MCF 10A (cell line): ENCODE measurements at regions of chr2 and their contacts with region 1.

Region 1: DNA sequence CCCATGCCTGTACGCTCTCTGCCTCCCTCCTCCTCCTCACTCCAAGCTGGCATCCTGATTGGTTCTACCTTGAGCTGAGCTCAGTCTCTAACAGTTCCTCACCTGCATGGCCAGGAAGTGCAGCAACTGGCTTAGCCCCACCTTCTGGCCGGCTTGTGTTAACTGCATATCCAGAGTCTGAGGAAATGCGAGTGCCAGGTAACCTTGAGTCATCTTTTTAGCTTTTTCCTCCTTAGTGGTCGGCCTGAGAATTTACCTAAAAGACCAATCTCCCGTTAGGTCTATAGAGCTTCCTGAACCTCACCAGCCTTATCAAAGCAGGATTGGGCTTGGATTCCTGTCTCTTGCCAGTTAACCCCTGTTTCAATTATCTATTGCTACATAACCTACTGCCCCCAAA is 89.5 kb upstream of the STK39 start:
- DNase-seq: peak; percentile 86
- H3K4me3 Mint-ChIP-seq: no peak overlapping the region
- H3K27ac Mint-ChIP-seq: no peak overlapping the region
- H3K4me1 Mint-ChIP-seq: no peaks in the 10 kb centered on the region
- H3K27me3 Mint-ChIP-seq: no peaks in the 10 kb centered on the region
- CTCF ChIP-seq: peak; percentile 44

Region 2: DNA sequence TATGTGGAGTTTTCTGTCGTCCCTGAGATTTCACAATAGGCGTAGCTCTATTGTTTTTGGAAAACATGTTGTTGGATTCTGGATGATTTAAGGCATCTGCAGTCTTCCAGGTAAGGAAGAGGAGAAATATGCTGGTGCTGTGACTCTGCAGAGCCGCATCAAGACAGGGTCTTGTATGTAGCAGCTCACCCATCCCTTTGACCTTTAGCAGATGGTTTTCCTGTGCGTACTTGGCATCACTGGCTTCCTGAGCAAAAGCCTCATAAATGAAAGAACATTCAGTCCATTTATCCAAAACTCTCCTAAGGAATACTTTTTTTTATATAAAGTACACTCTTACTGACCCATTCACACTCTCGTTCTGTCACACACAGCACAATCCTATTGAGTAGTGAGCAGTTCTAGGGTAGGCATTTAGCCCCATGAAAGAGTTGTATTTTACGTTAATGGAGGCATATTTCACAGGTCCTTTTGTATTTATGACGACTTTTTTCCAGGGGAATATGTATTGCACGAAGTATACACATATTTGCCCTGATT is 533.3 kb before region 1 on chr2:
- CTCF ChIA-PET with region 1: no interaction called
- POLR2A ChIA-PET with region 1: no interaction called
- intact Hi-C with region 1: no loop called
- DNase-seq: no peak
- H3K4me3 Mint-ChIP-seq: no peak overlapping the region
- H3K27ac Mint-ChIP-seq: no peak overlapping the region
- H3K4me1 Mint-ChIP-seq: no peaks in the 10 kb centered on the region
- H3K27me3 Mint-ChIP-seq: peaks cover 18% of the 10 kb centered on the region
- CTCF ChIP-seq: no peak

Region 3: DNA sequence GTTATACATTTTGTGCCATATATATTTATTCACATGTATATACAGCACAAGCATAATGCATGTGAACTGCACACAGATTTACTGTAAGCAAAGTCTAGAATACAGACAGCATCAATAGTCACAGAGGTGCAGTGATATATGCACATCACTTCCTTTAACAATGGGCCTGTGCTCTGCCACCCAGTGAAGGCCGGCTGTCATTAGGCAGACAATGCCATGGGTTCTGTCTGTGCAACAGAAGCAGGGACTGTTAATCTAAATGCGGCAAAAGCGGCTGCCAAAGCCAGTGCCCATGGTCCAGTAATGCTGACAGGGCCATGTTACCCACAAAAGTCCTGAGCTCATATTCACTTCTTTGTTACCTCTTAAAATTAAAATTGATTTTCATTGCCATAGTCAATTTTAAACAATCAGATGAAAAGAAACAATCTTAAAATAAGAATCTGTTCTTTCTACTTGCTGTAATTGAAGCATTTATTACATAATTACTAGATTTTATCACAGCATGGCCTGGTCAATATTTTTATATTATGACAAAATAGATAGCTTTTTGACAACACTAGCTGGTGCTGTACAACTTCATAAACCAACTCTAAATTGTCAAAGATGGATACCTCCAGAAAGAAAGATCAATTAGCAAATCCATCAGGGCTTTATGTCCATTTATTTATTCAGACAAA is 321.4 kb before region 1 on chr2:
- CTCF ChIA-PET with region 1: no interaction called
- POLR2A ChIA-PET with region 1: no interaction called
- intact Hi-C with region 1: no loop called
- DNase-seq: no peak
- H3K4me3 Mint-ChIP-seq: no peak overlapping the region
- H3K27ac Mint-ChIP-seq: no peak overlapping the region
- H3K4me1 Mint-ChIP-seq: no peaks in the 10 kb centered on the region
- H3K27me3 Mint-ChIP-seq: no peaks in the 10 kb centered on the region
- CTCF ChIP-seq: no peak

Region 4: DNA sequence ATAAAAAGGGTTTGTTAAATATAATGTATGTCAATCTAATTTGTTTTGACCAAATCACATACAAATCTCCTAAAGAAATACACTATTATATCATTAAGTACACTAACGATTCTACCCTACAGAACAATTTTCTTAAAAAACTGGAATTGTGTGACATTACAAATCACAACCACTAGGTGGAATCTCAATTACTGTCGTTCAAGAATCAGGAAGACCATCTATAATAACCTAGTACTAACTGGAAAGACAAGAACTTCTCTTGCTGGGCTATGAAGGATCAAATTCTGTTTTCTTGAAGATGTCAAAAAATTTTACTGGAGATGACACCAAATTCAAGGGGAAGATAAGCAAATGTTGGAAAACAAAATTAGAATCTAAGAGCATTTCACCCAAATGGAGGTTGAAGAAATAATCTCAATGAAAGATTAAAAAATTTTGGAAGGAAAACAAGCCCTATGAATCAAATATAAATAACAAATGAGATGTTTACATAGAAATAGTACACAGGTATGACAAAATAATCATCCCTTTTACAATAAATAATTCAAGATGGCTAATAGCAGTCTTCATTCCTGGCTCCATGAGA is 200.4 kb before region 1 on chr2:
- CTCF ChIA-PET with region 1: interaction called, 27 read pairs
- POLR2A ChIA-PET with region 1: interaction called, 3 read pairs
- intact Hi-C with region 1: loop called (anchors 1 kb)
- DNase-seq: peak; percentile 49
- H3K4me3 Mint-ChIP-seq: no peak overlapping the region
- H3K27ac Mint-ChIP-seq: no peak overlapping the region
- H3K4me1 Mint-ChIP-seq: peaks cover 10% of the 10 kb centered on the region
- H3K27me3 Mint-ChIP-seq: no peaks in the 10 kb centered on the region
- CTCF ChIP-seq: peak; percentile 54

Region 5: GRCh38 chr2:168246483-168247340 is 90.2 kb before region 1 on chr2:
- CTCF ChIA-PET with region 1: interaction called, 16 read pairs
- POLR2A ChIA-PET with region 1: no interaction called
- intact Hi-C with region 1: loop called (anchors 5 kb)
- DNase-seq: peak; percentile 63
- H3K4me3 Mint-ChIP-seq: peak overlapping the region; percentile 79
- H3K27ac Mint-ChIP-seq: peak overlapping the region; percentile 41
- H3K4me1 Mint-ChIP-seq: peaks cover 9% of the 10 kb centered on the region
- H3K27me3 Mint-ChIP-seq: no peaks in the 10 kb centered on the region
- CTCF ChIP-seq: peak; percentile 23

Region 6: DNA sequence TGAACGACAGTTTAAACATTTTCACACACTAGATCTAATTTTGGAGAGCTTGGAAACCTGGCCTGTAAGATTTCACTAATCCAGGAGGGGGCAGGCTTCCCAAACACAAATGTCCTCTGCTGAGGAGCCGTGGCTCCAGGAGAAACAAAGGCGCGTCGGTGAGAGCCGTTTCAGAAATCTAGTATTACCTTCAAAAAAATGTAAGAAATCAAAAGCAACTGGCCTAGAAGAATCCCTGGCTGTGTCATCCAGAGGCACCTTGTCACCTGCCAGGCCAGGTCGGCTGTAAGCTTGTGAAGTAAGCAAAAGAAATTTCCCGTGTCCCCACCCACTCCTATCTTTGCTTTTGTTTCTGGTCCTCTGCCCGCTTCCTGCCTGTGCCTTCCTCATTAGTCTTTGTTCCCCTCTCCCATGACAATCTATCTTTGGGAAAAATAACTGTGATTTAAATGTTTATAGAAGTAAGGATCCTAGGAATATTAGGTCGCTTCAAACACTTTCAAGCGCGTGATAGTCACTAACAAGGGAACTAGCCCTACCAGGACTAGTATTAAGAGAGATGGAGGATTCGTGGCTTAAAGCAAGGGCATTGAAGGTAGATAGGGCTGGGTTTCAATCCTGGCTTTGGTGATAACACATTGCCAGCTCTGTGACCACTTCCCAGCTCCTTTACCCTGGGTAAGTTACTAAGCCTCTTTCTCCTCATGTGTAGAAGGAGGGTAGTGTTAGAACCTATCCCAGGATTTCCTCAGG is 10.0 kb after region 1 on chr2:
- CTCF ChIA-PET with region 1: interaction called, 27 read pairs
- POLR2A ChIA-PET with region 1: no interaction called
- intact Hi-C with region 1: no loop called
- DNase-seq: peak; percentile 75
- H3K4me3 Mint-ChIP-seq: peak overlapping the region; percentile 75
- H3K27ac Mint-ChIP-seq: peak overlapping the region; percentile 65
- H3K4me1 Mint-ChIP-seq: peaks cover 14% of the 10 kb centered on the region
- H3K27me3 Mint-ChIP-seq: no peaks in the 10 kb centered on the region
- CTCF ChIP-seq: peak; percentile 83